OCI-LY7 (cell line): ENCODE measurements at regions of chr7 and their contacts with region 1.

Region 1: DNA sequence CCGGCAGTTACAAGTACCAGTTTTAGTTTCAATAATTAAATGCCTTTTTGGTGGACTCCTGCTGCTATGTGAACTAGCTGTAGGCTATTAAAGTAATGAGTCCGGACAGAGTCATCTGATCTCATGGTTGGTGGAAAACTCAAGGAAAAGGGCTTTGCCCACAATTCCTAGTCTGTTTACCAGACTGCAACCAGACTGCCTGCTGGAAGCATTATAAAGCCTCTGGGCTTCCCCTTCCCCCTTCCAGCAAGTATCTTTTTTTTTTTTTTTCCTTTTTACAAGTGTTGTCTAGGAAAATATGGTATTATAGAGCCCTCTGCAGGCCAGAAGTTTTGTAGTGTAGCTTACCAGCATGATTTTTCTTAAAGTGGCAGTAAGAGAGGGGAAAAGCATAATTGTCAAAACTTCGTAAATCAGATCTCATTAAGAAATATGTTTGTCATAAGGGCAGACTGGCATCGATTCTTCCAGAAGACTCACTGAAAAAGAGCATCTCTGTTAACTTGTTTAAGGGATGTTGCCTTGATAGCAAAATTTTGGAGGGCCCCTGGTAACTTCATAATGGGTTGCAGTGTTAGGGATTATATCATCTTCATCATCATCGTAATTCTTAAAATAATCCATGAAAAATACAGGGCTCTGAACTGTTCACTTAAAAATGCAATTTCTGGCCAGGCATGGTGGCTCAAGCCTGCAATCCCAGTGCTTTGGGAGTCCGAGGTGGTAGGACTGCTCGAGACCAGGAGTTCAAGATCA is 181.3 kb downstream of the TAX1BP1 start:
- DNase-seq: peak; percentile 84
- H3K4me3 ChIP-seq: peak overlapping the region; percentile 63
- H3K27ac ChIP-seq: peak overlapping the region; percentile 70
- H3K4me1 ChIP-seq: peaks cover 85% of the 10 kb centered on the region
- CTCF ChIP-seq: peak; percentile 93

Region 2: GRCh38 chr7:27196287-27196767 is 724.9 kb before region 1 on chr7:
- CTCF ChIA-PET with region 1: interaction called, 3 read pairs
- POLR2A ChIA-PET with region 1: no interaction called
- intact Hi-C with region 1: loop called (anchors 1 kb)
- DNase-seq: peak; percentile 74
- H3K4me3 ChIP-seq: no peak overlapping the region
- H3K27ac ChIP-seq: no peak overlapping the region
- H3K4me1 ChIP-seq: peaks cover 11% of the 10 kb centered on the region
- CTCF ChIP-seq: peak; percentile 96

Region 3: DNA sequence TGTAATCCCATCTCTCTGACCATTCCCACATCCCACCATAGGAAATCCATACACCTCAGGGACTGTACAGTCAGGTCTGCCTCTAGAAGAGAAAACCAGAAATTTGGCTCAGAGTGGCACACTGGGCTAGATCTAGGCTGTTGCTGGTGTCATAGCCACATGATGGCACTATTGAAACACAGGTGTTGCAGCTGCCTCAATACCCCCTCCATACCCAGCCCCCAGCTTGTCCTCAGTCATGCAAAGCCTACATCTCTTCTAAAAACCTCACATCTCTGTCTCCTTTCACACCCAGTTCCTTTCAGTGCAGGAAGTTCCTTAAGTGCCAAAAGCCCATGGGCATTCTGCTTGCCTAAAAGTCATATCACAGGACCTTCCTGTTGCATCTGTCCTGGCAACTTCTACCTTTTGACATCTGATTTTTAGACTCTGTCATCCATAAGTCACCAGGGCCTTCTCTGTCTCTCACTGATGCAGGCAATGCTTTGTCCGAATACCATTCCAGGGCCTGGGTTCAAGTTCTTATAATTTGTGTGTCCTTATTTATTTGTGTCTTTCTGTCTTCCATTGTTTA is 231.6 kb before region 1 on chr7:
- CTCF ChIA-PET with region 1: no interaction called
- POLR2A ChIA-PET with region 1: no interaction called
- intact Hi-C with region 1: loop called (anchors 1 kb)
- DNase-seq: peak; percentile 78
- H3K4me3 ChIP-seq: no peak overlapping the region
- H3K27ac ChIP-seq: no peak overlapping the region
- H3K4me1 ChIP-seq: peaks cover 11% of the 10 kb centered on the region
- CTCF ChIP-seq: peak; percentile 92

Region 4: DNA sequence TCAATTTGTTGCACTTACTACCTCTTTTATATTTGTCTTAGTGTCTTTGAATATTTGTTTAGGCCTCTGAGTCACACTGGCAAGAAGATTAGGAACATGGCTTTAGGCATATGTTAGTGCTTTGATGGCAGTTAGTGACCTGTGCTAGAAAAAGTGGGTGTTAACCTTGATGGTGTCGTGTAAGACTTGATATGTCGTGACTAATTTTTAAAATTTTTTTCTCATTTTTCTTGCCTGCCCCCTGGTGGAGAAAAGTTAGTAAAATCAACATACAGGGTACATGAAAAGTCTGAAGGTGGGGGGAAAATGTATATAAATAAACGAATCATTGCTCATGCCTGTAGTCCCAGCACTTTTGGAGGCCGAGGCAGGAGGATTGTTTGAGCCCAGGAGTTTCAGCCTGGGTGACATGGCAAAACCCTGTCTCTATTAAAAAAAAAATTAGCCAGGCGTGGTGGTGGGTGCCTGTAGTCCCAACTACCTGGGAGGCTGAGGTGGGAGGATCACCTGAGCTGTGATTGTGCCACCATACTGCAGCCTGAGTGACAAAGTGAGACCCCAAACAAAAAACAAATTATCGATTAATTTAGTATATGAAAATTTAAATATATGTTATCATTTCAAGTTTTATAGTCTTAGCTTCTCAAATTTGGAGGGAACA is 136.7 kb before region 1 on chr7:
- CTCF ChIA-PET with region 1: no interaction called
- POLR2A ChIA-PET with region 1: no interaction called
- intact Hi-C with region 1: loop called (anchors 5 kb)
- DNase-seq: peak; percentile 48
- H3K4me3 ChIP-seq: no peak overlapping the region
- H3K27ac ChIP-seq: no peak overlapping the region
- H3K4me1 ChIP-seq: no peaks in the 10 kb centered on the region
- CTCF ChIP-seq: peak; percentile 88

Region 5: DNA sequence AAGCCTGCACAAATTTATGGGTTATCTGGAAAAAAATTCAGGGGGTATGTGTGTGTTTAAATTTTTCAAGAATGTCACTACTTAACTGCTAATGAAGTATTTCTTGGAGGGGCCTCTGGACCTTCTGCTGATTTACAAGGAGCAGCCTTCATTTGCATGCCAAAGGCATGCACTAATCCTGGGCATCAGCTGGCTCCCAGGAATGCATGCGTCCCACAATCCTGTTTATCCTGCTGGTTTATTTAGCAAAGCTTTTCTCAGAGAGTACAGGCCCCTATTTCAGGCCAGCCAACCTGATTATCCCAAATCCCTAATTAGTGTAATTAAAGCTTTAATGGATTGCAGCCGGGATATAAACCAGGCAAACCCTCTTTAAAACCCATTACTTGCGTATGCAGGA is 10.9 kb before region 1 on chr7:
- CTCF ChIA-PET with region 1: no interaction called
- POLR2A ChIA-PET with region 1: interaction called, 12 read pairs
- intact Hi-C with region 1: no loop called
- DNase-seq: no peak
- H3K4me3 ChIP-seq: no peak overlapping the region
- H3K27ac ChIP-seq: no peak overlapping the region
- H3K4me1 ChIP-seq: peaks cover 8% of the 10 kb centered on the region
- CTCF ChIP-seq: no peak

Region 6: GRCh38 chr7:28096713-28097112 is 175.5 kb after region 1 on chr7:
- CTCF ChIA-PET with region 1: no interaction called
- POLR2A ChIA-PET with region 1: no interaction called
- intact Hi-C with region 1: loop called (anchors 10 kb)
- DNase-seq: peak; percentile 60
- H3K4me3 ChIP-seq: no peak overlapping the region
- H3K27ac ChIP-seq: no peak overlapping the region
- H3K4me1 ChIP-seq: peaks cover 7% of the 10 kb centered on the region
- CTCF ChIP-seq: peak; percentile 97

Region 7: DNA sequence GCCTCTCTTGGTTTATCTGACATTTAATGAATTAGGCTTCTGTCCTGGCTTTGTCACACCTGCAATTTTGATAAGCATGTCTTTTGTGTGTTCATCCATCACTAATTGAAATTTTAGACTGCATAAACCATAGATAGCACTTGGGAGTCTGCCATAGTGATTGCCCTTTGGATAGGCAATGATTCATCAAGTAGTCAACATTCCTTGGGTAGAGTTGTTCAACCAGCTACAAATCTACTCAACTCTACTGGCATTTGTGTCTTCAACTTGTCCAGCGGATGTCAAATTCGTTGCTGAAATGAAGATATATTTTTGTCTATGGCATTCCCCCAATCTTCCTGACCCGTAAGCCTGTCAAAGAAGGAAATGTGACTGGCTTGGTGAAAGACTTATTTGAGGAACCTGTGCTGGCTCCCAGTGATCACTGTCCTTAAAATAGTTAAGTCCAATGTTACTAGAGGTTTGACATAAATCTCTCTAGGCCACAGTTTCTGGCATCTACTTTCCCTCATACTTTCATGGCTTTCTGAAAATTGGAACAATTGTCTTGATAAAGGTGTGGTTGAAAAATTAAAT is 457.4 kb after region 1 on chr7:
- CTCF ChIA-PET with region 1: no interaction called
- POLR2A ChIA-PET with region 1: no interaction called
- intact Hi-C with region 1: no loop called
- DNase-seq: no peak
- H3K4me3 ChIP-seq: no peak overlapping the region
- H3K27ac ChIP-seq: no peak overlapping the region
- H3K4me1 ChIP-seq: no peaks in the 10 kb centered on the region
- CTCF ChIP-seq: no peak